HepG2 (cell line): ENCODE measurements at regions of chrX and their contacts with region 1.

Region 1: DNA sequence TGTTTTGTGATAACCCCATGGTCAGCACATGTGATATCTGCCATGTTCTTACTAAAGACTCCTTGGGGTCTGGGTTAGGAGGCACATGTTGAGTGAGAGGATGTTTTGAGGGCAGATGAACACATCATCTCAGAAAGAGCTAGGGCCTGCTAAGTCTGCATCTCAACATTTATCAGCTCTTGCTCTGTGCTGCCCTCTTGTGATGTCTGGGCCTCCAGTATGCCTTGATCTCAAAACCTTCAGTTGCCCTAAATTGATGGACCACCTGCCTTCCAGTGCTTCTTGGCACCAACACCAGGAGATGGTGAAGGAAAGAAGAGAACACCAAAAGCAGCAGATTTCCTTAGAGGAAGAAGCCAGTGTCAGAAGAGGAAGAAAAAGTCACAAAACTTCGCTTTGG is 22.5 kb downstream of the MID1 start:
- DNase-seq: peak; percentile 28
- ATAC-seq: peak; percentile 67
- H3K4me3 ChIP-seq: no peak overlapping the region
- H3K27ac ChIP-seq: no peak overlapping the region
- H3K4me1 ChIP-seq: no peaks in the 10 kb centered on the region
- H3K27me3 ChIP-seq: no peaks in the 10 kb centered on the region
- CTCF ChIP-seq: peak; percentile 56
- EP300 ChIP-seq: no peak
- POLR2A ChIP-seq: no peak
- RAD21 ChIP-seq: 0 out of 2 replicates have a peak, but pooled peaks have one; percentile 20

Region 2: GRCh38 chrX:10415306-10416001 is 182.4 kb before region 1 on chrX:
- CTCF ChIA-PET with region 1: no interaction called
- POLR2A ChIA-PET with region 1: no interaction called
- in situ Hi-C with region 1: no loop called
- intact Hi-C with region 1: no loop called
- DNase-seq: no peak
- ATAC-seq: no peak
- H3K4me3 ChIP-seq: no peak overlapping the region
- H3K27ac ChIP-seq: no peak overlapping the region
- H3K4me1 ChIP-seq: no peaks in the 10 kb centered on the region
- H3K27me3 ChIP-seq: no peaks in the 10 kb centered on the region
- CTCF ChIP-seq: no peak
- EP300 ChIP-seq: no peak
- POLR2A ChIP-seq: no peak
- RAD21 ChIP-seq: no peak

Region 3: DNA sequence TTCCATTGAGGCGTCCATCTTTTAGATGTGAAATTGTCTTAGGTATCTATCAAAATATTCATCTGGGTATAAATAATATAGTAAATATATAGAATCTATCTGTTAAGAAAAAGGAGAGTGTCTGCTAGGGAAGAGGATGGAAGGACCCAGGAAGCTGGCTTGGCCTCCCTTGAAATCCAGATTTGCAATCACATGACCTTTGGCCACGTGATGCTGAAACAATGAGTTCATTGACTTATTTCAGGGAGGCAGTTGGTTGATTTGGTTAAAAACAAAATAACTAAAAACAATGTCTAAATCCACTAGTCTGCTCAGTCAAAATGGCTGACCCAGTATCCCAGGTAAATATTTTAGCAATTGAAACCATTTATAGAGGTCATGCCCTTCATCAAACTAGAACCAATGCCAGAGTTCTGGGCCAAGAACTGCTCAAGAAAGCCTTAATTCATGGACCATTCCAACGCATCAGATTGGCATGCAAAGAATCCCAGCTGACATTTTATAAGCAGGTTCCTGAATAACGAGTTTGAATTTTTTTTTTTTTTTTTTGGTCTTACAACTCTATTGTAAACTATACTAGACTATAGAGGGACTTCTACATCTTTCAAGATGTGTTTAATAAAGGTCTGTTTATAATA is 150.2 kb before region 1 on chrX:
- CTCF ChIA-PET with region 1: no interaction called
- POLR2A ChIA-PET with region 1: no interaction called
- in situ Hi-C with region 1: no loop called
- intact Hi-C with region 1: loop called (anchors 1 kb)
- DNase-seq: no peak
- ATAC-seq: no peak
- H3K4me3 ChIP-seq: no peak overlapping the region
- H3K27ac ChIP-seq: no peak overlapping the region
- H3K4me1 ChIP-seq: no peaks in the 10 kb centered on the region
- H3K27me3 ChIP-seq: no peaks in the 10 kb centered on the region
- CTCF ChIP-seq: no peak
- EP300 ChIP-seq: no peak
- POLR2A ChIP-seq: no peak
- RAD21 ChIP-seq: no peak

Region 4: DNA sequence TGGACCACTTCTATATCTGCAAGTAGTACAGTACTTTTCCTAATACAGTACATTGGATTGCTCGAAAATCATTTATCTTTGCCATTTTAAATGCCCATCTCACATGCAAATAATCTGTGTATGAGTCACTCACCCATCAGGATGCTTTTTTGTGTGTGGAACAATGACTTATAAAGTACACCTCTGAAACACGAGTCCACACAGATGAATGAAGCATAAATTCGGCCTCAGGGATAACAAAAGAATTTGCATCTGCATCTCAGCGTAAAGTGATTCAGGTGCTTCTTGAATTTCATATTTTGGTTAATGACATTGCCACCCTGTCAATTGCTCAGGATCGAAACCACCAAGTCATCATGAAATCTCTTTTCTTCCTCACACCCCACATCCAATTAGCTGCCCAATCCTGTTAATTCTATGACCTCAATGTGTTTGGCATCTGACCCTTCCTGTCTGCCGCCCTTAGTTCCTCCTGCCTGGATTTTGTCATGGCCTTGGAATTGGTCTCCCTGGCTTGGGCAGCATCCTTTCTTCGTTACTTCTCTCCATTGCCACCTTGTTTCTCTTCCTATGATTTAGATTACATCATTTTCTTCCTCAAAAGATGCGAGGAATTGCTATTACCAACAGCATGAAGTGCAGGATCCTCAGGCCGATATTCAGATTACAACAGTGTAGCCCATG is 184.1 kb after region 1 on chrX:
- CTCF ChIA-PET with region 1: no interaction called
- POLR2A ChIA-PET with region 1: interaction called, 6 read pairs
- in situ Hi-C with region 1: no loop called
- intact Hi-C with region 1: loop called (anchors 5 kb)
- DNase-seq: no peak
- ATAC-seq: no peak
- H3K4me3 ChIP-seq: no peak overlapping the region
- H3K27ac ChIP-seq: no peak overlapping the region
- H3K4me1 ChIP-seq: no peaks in the 10 kb centered on the region
- H3K27me3 ChIP-seq: no peaks in the 10 kb centered on the region
- CTCF ChIP-seq: no peak
- EP300 ChIP-seq: no peak
- POLR2A ChIP-seq: no peak
- RAD21 ChIP-seq: no peak

Region 5: DNA sequence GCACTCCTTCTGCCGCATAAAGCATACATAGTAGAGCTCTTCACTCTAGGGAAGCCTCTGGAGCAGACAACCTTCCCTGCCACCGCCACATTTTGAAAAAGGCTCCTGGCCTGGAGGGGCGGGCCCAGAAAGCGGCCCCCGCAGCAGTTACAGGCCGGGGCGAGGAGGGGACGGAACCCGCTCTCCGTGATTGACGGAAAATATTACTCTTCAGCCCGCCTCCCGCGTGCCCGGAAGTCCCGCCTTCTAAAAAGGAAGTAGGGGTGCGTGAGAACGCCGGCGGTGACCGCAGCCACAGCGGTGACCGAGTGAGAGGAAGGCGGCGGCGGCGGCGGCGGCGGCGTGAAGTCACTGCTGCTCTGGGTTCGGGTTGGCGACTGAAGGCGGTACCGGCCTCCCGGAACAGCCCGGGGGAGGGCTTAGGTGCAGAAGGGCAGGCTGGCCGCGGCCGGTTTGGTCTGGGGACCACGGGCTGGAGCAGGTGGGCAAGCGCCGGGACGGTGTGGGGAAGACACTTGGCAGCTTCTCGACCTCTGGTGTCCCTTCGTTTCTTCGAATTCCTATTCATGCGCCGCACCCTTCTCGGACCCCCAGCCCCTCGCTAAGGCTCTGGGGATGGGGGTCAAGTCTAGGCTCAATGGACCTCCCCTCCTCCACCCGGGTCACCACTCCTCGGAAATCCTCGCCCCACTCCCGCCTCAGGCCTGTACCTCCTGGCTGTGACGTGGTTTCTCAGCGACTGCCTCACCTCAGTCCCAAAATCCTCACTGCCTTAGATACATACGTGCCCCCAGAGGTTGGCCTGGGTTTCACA is 513.4 kb after region 1 on chrX and contains the start of gene HCCS:
- CTCF ChIA-PET with region 1: no interaction called
- POLR2A ChIA-PET with region 1: no interaction called
- in situ Hi-C with region 1: no loop called
- intact Hi-C with region 1: no loop called
- DNase-seq: peak; percentile 67
- ATAC-seq: peak; percentile 98
- H3K4me3 ChIP-seq: peak within 1 kb of the TSS; percentile 67 to 88 (median 86)
- H3K27ac ChIP-seq: peak within 1 kb of the TSS; percentile 82
- H3K4me1 ChIP-seq: peaks cover 30% of the 10 kb centered on the region
- H3K27me3 ChIP-seq: no peaks in the 10 kb centered on the region
- CTCF ChIP-seq: no peak
- EP300 ChIP-seq: no peak
- POLR2A ChIP-seq: peak; percentile 29 to 53; a peak in 2 of 4 replicates
- RAD21 ChIP-seq: 0 out of 2 replicates have a peak, but pooled peaks have one; percentile 13
- total RNA-seq, gene HCCS: 16.7 and 28.6 TPM in 2 replicates